ENCODE measurements at regions of chr6 and their contacts with region 1.

Region 1: DNA sequence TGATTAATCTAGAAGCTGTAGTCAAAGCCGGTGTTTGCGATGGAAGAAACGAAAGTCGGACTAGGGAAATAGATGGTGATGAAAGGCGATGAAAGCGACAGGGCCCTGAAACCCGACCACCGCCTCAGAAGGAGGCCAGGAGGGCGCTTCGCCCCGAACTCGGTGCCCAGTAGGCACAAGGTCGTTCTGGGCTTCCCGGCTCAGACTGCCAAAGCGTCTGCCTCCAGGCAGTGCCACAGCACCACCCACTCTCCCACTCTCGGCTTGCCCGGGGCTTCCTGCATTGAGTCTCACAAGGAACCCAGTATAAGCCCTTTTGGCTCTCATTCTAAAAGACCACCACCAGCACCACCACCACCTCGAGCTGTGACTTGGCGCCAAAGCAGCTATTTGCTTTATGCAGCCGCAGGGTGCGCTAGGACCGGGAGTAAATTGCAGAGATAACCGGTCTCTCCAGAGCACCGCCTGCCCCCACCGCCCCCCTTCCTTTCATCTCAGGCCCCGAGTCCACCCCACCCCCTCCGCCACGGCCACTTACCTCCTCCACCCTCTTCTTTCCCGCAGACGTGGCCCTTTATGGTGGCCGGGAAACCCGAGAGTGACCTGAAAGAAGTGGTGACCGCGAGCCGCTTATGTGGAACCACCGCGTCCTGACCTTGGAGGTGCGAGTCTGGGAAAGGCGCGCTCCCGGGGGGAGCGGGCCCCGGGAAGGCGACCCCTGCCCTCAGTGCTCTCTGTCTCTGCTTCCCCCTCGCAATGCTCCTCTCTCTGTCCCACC is 2.4 kb downstream of the TCF21 start:
- DNase-seq: peak in 4 of 5 donors; percentile 25 to 68 (median 48)
- ATAC-seq: peak in 2 of 4 donors; percentile 21 to 29
- H3K4me3 ChIP-seq: peak overlapping the region; percentile 23 to 74 (median 55)
- H3K27ac ChIP-seq: peak overlapping the region; percentile 17 to 90 (median 80)
- H3K4me1 ChIP-seq: peaks cover 0 to 37% (median 16%) of the 10 kb centered on the region in 12 donors
- H3K27me3 ChIP-seq: peaks cover 10 to 97% (median 75%) of the 10 kb centered on the region in 9 donors
- CTCF ChIP-seq: no peak
- POLR2A ChIP-seq: no peak

Region 2: DNA sequence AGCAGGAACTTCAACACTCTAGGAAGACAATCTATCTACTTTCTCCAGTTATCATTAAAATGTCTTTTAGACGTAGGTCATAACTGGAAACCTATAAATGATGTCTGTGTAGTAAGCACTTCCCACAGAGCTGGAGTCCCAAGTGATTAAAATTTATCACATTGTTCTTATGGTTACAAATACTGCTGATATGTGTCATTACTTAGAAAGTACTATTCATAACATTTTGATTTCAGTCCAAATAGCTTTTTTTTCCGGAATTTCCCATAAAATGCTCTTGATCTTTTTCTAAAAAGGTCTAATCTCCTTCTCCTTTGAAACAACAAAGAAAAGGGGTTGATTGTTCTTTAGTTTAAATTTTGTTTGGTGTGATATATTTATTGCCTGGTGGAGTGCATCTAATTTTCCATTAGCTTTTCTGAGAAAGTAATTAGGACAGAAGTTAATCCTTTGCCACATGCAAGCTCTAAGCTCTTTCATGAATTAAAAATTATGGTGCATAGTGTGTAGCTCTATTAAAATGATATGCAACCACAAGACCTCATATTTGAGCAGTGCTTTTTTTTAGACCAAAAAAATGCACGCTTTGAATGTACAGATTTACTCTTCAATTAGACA is 135.2 kb before region 1 on chr6:
- intact Hi-C with region 1: loop called in 3 of 10 experiments (anchors 5 kb)
- DNase-seq: no peak
- ATAC-seq: peak in 3 of 4 donors; percentile 51 to 77 (median 65)
- H3K4me3 ChIP-seq: no peak overlapping the region
- H3K27ac ChIP-seq: peak overlapping the region in 11 of 12 donors; percentile 21 to 60 (median 44)
- H3K4me1 ChIP-seq: peaks cover 0 to 49% (median 2%) of the 10 kb centered on the region in 12 donors
- H3K27me3 ChIP-seq: no peaks in the 10 kb centered on the region
- CTCF ChIP-seq: no peak
- POLR2A ChIP-seq: no peak

Region 3: DNA sequence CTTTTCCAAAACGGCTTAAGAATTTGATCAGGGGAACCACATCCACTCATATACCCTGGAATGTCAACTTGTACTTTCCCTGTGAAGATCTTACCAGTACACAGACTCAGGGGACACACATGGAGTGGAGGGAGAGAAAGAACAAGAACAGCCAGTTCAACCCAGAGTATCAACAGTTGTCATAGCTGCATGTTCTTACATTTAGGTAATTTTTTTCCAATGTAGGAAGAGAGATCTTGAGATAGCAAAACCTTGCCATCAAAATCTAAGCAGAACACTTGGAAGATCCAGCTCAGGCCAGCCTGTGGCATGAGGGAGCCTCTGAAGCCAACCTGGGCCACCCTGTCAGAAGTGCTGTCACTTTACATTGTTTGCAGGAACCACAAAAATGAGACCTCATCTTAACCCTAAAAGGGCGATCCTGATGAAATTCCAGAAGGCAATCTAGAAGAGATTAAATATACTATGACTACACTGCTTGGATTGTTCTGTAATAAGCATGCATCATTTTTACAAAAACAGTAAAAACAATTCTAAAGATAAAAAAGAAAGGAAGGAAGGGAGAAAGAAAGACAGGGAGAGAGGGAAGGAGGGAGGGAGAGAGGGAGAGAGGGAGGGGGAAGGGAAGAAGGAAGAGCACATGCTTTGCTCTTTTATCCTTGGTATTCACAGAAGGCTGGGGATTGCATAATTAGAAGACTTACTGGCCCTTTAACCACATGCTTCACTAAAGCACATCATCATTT is 127.2 kb before region 1 on chr6:
- intact Hi-C with region 1: loop called in 3 of 10 experiments (anchors 5 kb)
- DNase-seq: no peak
- ATAC-seq: peak; percentile 63 to 80 (median 76)
- H3K4me3 ChIP-seq: no peak overlapping the region
- H3K27ac ChIP-seq: peak overlapping the region; percentile 2 to 75 (median 60)
- H3K4me1 ChIP-seq: peaks cover 0 to 34% (median 0%) of the 10 kb centered on the region in 12 donors
- H3K27me3 ChIP-seq: no peaks in the 10 kb centered on the region
- CTCF ChIP-seq: no peak
- POLR2A ChIP-seq: no peak

Region 4: DNA sequence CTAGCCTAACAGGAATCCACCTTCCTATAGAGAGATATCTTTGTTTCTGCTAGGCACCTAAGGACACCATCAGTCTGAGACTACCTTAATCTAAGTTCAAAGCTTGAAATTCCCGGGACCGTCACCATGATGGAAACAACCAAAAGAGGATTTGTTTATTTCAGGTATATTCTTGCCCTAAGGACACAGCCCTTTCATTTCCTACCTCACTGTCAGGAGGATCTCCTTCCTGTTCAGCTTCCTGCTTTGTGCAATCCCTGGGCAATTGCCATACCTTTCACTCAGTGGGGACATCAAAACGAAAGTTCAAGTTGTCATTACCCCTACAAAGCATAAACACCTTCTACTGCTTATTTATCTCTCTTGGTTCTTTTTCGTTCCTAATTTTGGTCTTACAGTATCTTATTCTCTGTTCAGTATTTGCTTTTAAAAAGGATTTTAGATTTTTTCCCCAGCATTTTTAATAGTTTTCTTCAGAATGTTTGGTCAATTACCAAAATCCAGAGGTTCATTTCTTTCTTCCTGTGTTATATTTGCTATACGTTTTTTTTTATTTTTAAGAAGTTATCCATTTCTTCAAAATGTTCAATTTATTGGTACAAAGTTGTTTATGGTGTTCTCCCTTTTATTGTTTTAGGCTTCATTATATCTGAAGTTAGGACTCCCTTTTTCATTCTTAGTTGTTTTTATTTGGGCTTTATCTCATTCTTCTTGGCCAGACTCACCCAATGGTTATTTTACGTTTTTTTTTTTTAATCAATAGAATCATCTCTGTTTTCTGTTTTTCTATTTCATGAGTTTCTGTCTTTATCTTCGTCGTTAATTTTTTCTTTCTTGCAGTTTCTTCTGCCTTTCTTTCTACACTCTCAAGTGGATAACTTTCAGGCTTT is 48.7 kb after region 1 on chr6:
- intact Hi-C with region 1: no loop called
- DNase-seq: no peak
- ATAC-seq: no peak
- H3K4me3 ChIP-seq: no peak overlapping the region
- H3K27ac ChIP-seq: no peak overlapping the region
- H3K4me1 ChIP-seq: no peaks in the 10 kb centered on the region
- H3K27me3 ChIP-seq: no peaks in the 10 kb centered on the region
- CTCF ChIP-seq: no peak
- POLR2A ChIP-seq: no peak